ENCODE measurements at regions of chr7 and their contacts with region 1.

Region 1: GRCh38 chr7:95916573-95917297 is 144.4 kb downstream of the DYNC1I1 start:
- DNase-seq: peak; percentile 52
- ATAC-seq: peak; percentile 34
- H3K4me3 Mint-ChIP-seq: no peak overlapping the region
- H3K27ac Mint-ChIP-seq: no peak overlapping the region
- H3K4me1 Mint-ChIP-seq: no peaks in the 10 kb centered on the region
- H3K27me3 Mint-ChIP-seq: peaks cover 16% of the 10 kb centered on the region
- CTCF ChIP-seq: no peak

Region 2: GRCh38 chr7:94657771-94658693 is 1258.7 kb before region 1 on chr7:
- CTCF ChIA-PET with region 1: no interaction called
- POLR2A ChIA-PET with region 1: no interaction called
- intact Hi-C with region 1: no loop called
- DNase-seq: peak; percentile 90
- ATAC-seq: peak; percentile 82
- H3K4me3 Mint-ChIP-seq: peak overlapping the region; percentile 89
- H3K27ac Mint-ChIP-seq: no peak overlapping the region
- H3K4me1 Mint-ChIP-seq: peaks cover 20% of the 10 kb centered on the region
- H3K27me3 Mint-ChIP-seq: no peaks in the 10 kb centered on the region
- CTCF ChIP-seq: no peak

Region 3: DNA sequence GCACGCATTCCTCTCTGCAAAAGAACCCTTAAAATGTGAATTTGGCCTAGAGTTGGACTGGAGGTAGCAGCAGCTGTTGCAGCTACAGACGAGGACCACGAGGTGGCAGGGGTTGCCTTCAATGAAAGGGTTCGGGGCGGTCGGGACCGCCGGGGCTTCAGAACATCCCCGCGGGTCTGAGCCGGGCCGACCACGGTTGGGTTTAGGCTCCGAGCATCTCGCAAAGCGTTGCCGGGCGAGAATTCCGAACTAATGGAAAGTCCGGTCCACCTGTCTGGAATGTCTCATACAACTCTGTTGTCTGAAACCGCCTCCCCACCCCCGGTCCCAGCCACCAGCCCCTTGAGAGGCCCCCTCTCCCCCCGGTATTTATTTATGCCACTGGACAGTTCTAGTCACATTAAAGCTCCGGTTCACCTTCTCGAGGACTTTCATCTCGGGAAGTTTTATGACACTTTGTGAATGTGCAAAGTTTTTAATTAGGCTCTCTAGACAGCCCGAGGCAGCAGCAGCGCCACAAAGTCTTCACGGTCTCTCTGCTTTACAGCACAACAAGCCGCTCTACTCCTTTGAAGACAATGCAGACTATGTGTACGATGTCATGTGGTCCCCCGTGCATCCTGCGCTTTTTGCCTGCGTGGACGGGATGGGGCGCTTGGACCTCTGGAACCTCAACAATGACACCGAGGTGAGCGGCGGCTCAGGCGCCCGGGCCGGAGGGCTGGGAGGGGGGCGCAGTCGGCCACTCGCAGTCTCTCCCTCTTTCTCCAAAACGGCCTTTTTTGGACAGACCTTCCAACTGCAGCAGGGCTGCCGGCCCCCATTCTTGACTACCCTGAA is 159.0 kb after region 1 on chr7:
- CTCF ChIA-PET with region 1: no interaction called
- POLR2A ChIA-PET with region 1: no interaction called
- intact Hi-C with region 1: loop called (anchors 1 kb)
- DNase-seq: peak; percentile 37
- ATAC-seq: peak; percentile 89
- H3K4me3 Mint-ChIP-seq: peak overlapping the region; percentile 84
- H3K27ac Mint-ChIP-seq: no peak overlapping the region
- H3K4me1 Mint-ChIP-seq: peaks cover 7% of the 10 kb centered on the region
- H3K27me3 Mint-ChIP-seq: peaks cover 27% of the 10 kb centered on the region
- CTCF ChIP-seq: peak; percentile 45

Region 4: GRCh38 chr7:96118449-96119001 is 201.8 kb after region 1 on chr7:
- CTCF ChIA-PET with region 1: no interaction called
- POLR2A ChIA-PET with region 1: no interaction called
- intact Hi-C with region 1: no loop called
- DNase-seq: no peak
- ATAC-seq: no peak
- H3K4me3 Mint-ChIP-seq: no peak overlapping the region
- H3K27ac Mint-ChIP-seq: no peak overlapping the region
- H3K4me1 Mint-ChIP-seq: no peaks in the 10 kb centered on the region
- H3K27me3 Mint-ChIP-seq: no peaks in the 10 kb centered on the region
- CTCF ChIP-seq: no peak

Region 5: GRCh38 chr7:97064967-97065587 is 1148.3 kb after region 1 on chr7:
- CTCF ChIA-PET with region 1: interaction called, 19 read pairs
- POLR2A ChIA-PET with region 1: no interaction called
- intact Hi-C with region 1: loop called (anchors 1 kb)
- DNase-seq: no peak
- ATAC-seq: peak; percentile 71
- H3K4me3 Mint-ChIP-seq: no peak overlapping the region
- H3K27ac Mint-ChIP-seq: no peak overlapping the region
- H3K4me1 Mint-ChIP-seq: no peaks in the 10 kb centered on the region
- H3K27me3 Mint-ChIP-seq: peaks cover 7% of the 10 kb centered on the region
- CTCF ChIP-seq: no peak

Region 6: DNA sequence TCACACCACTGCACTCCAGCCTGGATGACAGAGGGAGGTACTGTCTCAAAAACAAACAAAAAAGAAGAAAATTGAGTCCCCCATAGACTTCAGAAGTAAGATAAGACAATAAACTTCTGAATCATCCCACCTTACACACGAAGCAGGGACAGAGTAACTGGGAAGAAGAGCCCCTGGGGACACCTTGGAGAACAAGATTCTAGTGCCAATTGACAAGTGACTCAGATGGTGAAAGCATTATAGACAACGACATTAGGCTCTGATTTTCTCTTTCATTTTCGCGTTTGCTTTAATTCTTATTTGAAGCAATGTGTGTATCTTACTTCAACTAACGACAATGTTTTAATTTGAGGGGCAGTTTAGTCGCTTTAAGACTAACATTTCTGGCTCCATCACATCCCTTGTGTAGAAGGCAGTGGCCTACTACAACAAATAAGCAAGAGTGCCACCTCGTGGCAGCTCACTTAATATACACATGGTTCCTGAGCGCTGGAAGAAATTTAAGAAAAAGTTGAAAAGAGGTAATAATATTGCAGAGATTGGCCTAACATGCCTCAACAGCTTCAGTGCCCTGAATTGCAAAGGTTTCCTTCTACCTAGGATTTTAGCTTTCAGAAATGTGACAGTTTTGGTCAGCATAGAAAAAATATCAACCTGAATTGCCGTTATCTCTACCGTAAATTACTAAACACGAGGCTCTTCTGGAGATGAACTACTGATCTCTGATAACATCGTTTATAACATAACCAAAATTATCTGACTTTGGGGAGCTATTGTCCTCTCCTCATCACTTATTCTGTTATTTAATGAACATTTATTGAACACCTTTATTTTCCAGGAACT is 1918.8 kb after region 1 on chr7:
- CTCF ChIA-PET with region 1: interaction called, 17 read pairs
- POLR2A ChIA-PET with region 1: no interaction called
- intact Hi-C with region 1: loop called (anchors 1 kb)
- DNase-seq: no peak
- ATAC-seq: peak; percentile 69
- H3K4me3 Mint-ChIP-seq: no peak overlapping the region
- H3K27ac Mint-ChIP-seq: no peak overlapping the region
- H3K4me1 Mint-ChIP-seq: no peaks in the 10 kb centered on the region
- H3K27me3 Mint-ChIP-seq: peaks cover 29% of the 10 kb centered on the region
- CTCF ChIP-seq: no peak